Activated CD4-positive, alpha-beta memory T cell treated with anti-CD3 and anti-CD28 coated beads for 36 hours (primary cell): ENCODE measurements at regions of chr5 and their contacts with region 1.

Region 1: DNA sequence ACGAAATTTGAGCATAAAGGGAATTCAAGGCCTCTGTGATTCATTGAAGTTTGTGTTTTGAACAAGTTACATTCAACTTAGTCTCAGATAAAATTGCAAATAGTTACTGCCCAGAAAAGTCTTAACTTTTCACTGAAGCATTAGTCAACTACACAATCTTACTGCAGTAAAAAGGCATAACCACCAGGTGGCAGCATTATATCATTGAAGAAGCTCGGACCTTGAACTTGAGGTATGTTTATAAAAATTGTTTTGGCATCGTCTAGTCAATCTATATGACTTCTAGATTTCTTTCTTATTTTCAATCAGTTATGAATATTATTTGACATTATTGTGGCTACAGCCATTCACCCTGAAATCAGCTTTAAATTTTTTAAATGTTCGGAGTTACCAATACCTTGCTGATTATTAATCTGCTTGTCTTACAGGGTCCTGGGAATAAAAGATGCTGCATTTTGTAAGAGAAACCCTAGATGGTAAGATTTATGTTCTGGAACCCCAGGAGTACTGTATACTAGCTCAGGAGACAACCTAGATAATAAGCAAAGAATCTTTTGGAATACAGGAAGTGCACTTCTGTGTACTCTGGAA is 83.9 kb upstream of the GRAMD2B start:
- DNase-seq: peak; percentile 29
- H3K4me3 Mint-ChIP-seq: no peak overlapping the region
- H3K27ac Mint-ChIP-seq: no peak overlapping the region
- H3K4me1 Mint-ChIP-seq: no peaks in the 10 kb centered on the region
- H3K27me3 Mint-ChIP-seq: peaks cover 12% of the 10 kb centered on the region

Region 2: DNA sequence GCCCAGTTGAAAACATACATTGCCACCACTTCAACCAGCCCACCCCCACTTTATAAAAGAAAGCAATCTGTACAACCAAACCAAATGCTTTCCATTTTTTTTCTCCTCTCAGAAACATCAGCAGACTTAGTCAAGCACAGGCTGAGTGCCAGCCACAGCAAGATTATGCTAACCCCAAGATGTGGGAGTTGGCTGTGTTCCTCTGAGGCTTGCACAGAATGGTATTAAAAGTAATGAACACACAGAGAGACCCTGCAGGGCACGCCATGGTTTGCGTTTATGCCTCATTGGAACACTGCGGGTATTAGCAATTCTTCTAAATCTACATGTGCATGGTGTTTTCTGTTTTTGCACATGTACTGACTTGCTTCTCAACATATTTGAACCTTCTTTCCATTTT is 336.0 kb before region 1 on chr5:
- CTCF ChIA-PET with region 1: no interaction called
- POLR2A ChIA-PET with region 1: no interaction called
- intact Hi-C with region 1: no loop called
- DNase-seq: no peak
- H3K4me3 Mint-ChIP-seq: no peak overlapping the region
- H3K27ac Mint-ChIP-seq: no peak overlapping the region
- H3K4me1 Mint-ChIP-seq: no peaks in the 10 kb centered on the region
- H3K27me3 Mint-ChIP-seq: no peaks in the 10 kb centered on the region

Region 3: GRCh38 chr5:126544087-126544740 is 204.9 kb after region 1 on chr5:
- CTCF ChIA-PET with region 1: interaction called, 119 read pairs
- POLR2A ChIA-PET with region 1: no interaction called
- intact Hi-C with region 1: loop called (anchors 1 kb)
- DNase-seq: peak; percentile 56
- H3K4me3 Mint-ChIP-seq: no peak overlapping the region
- H3K27ac Mint-ChIP-seq: no peak overlapping the region
- H3K4me1 Mint-ChIP-seq: no peaks in the 10 kb centered on the region
- H3K27me3 Mint-ChIP-seq: no peaks in the 10 kb centered on the region

Region 4: GRCh38 chr5:126600631-126601511 is 261.6 kb after region 1 on chr5 and contains the start of gene PHAX:
- CTCF ChIA-PET with region 1: interaction called, 10 read pairs
- POLR2A ChIA-PET with region 1: no interaction called
- intact Hi-C with region 1: loop called (anchors 1 kb)
- DNase-seq: peak; percentile 82
- H3K4me3 Mint-ChIP-seq: peak within 1 kb of the TSS; percentile 99
- H3K27ac Mint-ChIP-seq: peak within 1 kb of the TSS; percentile 97
- H3K4me1 Mint-ChIP-seq: peaks cover 35% of the 10 kb centered on the region
- H3K27me3 Mint-ChIP-seq: no peaks in the 10 kb centered on the region
- total RNA-seq, gene PHAX: 40.7 to 43.2 TPM

Region 5: DNA sequence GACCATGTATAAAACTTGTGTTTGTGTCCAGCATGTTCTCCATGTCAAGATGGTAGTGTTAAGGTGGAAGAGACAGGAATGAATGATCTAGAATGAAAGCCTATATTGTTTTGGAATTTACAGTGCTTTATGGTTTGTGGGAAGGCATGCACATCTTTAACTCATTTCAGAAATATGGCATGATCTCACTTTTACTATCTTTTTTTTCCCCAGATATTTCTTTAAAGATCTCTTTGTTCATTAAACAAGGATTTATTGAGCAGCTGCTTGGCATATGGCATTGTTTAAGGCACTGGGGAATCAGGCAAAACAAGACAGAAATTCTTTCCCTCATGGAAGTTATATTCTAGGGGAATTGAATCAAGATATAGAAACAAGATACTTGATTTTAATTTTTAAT is 1796.0 kb after region 1 on chr5:
- CTCF ChIA-PET with region 1: no interaction called
- POLR2A ChIA-PET with region 1: no interaction called
- intact Hi-C with region 1: no loop called
- DNase-seq: no peak
- H3K4me3 Mint-ChIP-seq: no peak overlapping the region
- H3K27ac Mint-ChIP-seq: no peak overlapping the region
- H3K4me1 Mint-ChIP-seq: no peaks in the 10 kb centered on the region
- H3K27me3 Mint-ChIP-seq: no peaks in the 10 kb centered on the region